Heart left ventricle (tissue), 16 donors: ENCODE measurements at regions of chr4 and their contacts with region 1.

Region 1: DNA sequence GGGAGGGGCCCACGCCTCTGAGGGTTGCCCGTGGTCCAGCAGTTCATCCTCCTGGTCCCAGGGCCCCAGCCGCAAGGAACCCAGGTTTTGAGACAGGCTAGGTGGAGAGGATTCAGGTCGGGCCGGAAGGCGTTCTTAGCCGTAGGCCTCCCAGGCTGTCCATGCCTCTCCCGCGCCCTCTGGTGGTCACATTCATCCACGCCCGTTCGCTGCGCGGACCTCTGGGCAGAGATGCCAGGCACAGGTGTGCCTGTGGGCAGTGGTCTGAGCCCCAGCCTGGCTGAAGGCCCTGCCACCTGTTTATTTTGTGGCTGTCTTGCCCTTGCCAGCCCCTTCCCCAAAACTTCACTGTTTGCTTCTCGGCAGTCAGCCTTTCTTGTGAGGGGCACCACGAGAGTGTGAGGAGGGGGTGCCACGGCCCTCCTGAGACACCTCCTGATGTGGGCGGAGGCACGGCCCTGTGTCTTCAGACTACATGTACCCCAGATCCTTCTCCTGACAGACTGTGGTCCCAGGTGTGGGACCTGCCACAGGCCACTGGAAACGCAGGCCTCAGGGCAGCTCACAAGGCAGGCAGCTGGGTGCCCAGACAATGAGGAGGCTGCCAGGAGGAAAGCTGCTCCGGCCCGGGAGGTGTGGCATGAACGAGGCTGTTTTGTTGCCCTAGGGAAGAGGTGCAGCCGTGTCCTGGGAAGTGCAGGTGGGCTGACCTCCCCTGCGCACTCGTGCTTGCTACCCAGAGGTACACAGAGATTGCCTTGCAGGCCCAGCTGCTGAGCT is 5.0 kb downstream of the UVSSA start:
- DNase-seq: peak; percentile 75 to 91 (median 85)
- ATAC-seq: peak in 3 of 4 donors; percentile 14 to 33 (median 21)
- H3K4me3 ChIP-seq: no peak overlapping the region
- H3K27ac ChIP-seq: peak overlapping the region in 1 of 12 donors; percentile 17
- H3K4me1 ChIP-seq: peaks cover 0 to 25% (median 13%) of the 10 kb centered on the region in 12 donors
- H3K27me3 ChIP-seq: no peaks in the 10 kb centered on the region
- CTCF ChIP-seq: peak; percentile 84 to 99 (median 92)
- POLR2A ChIP-seq: no peak

Region 2: DNA sequence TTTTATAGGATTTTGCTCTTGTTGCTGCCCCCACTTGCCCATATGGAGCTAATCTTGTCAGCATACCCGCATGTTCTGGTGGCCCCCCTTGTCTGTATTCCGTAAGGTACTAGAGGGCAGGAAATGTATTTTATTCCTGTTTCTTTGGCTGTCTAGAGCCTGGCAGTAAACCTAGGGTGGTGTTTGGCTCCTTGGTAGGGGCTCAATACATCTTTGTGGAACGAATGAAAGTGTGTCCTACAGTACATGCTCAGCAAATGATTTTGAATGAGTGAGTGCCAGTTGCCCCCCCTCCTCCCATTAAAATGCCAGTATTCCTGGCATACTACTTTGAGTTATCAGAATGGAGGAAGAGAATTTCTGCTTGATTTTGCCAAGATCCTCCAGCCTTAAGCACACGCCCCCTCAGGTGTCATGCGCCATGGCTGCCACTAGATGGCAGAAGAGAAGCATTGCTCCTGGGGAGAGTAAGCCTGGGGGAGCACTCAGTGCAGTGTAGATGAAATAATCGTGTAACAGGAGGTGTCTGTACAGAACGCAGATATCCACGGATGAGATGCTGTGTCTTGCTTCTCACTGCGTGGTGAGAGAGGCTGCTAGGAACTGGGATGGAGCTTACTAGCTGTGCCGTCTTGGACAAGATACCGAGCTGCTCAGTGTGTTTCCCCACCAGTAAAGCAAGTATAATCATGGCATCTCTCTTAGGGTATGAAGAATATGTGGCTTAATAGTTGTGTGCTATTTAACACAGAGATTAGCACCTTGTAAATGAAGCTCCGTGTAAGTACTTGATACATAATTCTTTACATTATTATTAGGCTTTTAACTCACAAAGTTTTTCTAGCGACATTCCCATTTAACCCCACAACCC is 221.5 kb before region 1 on chr4:
- intact Hi-C with region 1: loop called (anchors 2 to 10 kb)
- DNase-seq: peak in 4 of 5 donors; percentile 51 to 66 (median 56)
- ATAC-seq: peak; percentile 83 to 97 (median 94)
- H3K4me3 ChIP-seq: no peak overlapping the region
- H3K27ac ChIP-seq: no peak overlapping the region
- H3K4me1 ChIP-seq: peaks cover 0 to 3% (median 0%) of the 10 kb centered on the region in 12 donors
- H3K27me3 ChIP-seq: peaks cover 0 to 4% (median 0%) of the 10 kb centered on the region in 9 donors
- CTCF ChIP-seq: peak; percentile 98 to 100 (median 99)
- POLR2A ChIP-seq: no peak

Region 3: DNA sequence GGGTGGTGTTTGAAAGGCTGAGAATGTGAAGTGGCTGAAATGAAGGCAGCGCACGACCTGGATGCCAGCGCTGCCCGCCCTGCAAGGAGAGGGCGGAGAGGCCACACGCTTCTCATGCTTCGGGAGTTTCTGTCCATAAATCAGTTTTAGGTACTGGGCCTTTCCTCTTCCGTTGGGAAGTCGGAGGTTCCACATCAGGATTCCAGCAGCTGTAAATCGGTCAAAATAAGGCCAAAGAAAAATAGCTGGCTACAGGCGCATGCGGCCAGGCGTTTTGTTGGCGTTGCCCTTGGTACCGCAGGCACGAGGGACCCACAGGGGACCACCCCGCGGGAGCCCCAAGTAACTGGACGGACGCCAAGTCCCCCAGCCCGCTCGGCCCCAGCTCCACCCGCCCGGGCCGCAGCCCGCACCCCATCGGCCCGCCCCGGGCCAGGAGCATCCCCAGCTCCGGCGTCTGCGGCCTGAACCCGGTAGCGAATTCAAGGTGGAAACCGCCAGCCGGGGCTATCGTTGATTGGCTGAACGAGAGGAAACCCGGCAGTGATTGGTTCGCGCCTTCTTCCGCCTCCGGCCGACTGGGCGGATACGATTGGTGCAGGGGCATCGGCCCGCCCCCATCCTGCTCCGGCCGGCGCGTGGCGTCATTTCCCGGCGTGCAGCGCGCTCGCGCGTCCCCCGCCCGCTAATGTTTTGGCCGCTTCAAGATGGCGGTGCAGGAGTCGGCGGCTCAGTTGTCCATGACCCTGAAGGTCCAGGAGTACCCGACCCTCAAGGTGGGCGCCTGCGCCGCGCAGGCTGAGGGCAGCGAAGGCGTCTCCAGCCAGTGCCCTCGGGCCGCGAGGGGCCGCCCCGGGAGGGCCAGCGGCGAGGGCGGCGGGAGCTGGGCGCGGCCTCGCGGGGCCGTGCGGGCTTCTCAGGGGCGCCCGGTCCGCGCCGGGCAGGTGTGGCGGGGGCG is 62.6 kb before region 1 on chr4 and contains the start of gene MAEA:
- intact Hi-C with region 1: loop called in 5 of 10 experiments (anchors 2 to 5 kb)
- DNase-seq: peak; percentile 98 to 99 (median 98)
- ATAC-seq: peak; percentile 97 to 98 (median 98)
- H3K4me3 ChIP-seq: peak within 1 kb of the TSS; percentile 81 to 99 (median 96)
- H3K27ac ChIP-seq: peak within 1 kb of the TSS; percentile 75 to 96 (median 90)
- H3K4me1 ChIP-seq: peaks cover 10 to 50% (median 45%) of the 10 kb centered on the region in 12 donors
- H3K27me3 ChIP-seq: no peaks in the 10 kb centered on the region
- CTCF ChIP-seq: peak in 1 of 12 donors; percentile 6
- POLR2A ChIP-seq: peak in 1 of 2 donors; percentile 90
- total RNA-seq, gene MAEA: 41.5 to 57.2 (median 45.1) TPM

Region 4: GRCh38 chr4:1318488-1319213 is 33.4 kb before region 1 on chr4:
- intact Hi-C with region 1: no loop called
- DNase-seq: peak in 2 of 5 donors; percentile 24 to 55
- ATAC-seq: no peak
- H3K4me3 ChIP-seq: no peak overlapping the region
- H3K27ac ChIP-seq: no peak overlapping the region
- H3K4me1 ChIP-seq: peaks cover 0 to 6% (median 0%) of the 10 kb centered on the region in 12 donors
- H3K27me3 ChIP-seq: no peaks in the 10 kb centered on the region
- CTCF ChIP-seq: peak in 7 of 12 donors; percentile 13 to 32 (median 22)
- POLR2A ChIP-seq: no peak

Region 5: DNA sequence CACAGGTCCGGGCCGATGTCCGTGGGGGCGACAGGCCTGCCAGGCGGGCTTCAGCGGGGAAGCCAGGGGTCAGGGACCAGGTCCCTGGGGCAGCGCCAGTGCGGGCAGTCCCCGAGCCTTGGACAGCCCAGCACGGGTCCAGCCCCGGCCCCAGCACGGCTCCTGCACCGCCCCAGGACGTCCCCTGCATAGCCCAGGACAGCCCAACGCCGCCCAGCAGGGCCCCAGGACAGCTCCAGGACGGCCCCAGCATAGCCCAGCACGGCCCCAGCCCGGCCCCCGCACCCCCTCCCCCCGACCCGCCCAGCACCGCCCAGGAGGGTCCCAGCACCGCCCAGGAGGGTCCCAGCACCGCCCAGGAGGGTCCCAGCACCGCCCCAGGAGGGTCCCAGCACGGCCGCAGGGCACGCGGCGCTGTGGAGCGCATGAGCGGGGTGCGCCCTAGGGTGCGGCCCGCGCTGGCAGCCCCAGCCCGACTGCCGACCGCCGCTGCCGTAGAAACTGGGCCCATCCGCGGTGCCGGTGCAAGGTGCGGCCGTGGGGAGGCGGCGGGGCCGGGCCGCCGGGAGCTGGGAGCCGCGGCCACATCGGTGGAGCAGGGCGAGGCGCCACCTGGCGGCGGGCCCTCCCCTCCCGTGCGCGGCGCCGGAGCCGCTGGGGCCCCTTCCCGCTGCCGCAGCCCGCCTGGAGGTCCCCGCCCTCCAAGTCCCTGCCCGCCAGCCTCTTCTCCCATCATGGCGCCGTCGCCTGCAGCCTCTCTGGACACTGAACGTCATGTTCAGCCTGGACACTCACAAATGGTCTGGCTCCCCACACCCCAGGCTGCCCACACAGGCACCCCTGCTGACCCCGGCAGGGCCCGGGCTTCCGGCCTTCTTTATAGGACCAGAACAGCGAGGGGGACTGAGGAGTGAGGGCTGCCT is 161.0 kb after region 1 on chr4:
- intact Hi-C with region 1: loop called in 8 of 10 experiments (anchors 2 to 5 kb)
- DNase-seq: peak in 3 of 5 donors; percentile 30 to 67 (median 36)
- ATAC-seq: peak in 3 of 4 donors; percentile 47 to 75 (median 56)
- H3K4me3 ChIP-seq: peak overlapping the region in 8 of 12 donors; percentile 2 to 48 (median 31)
- H3K27ac ChIP-seq: peak overlapping the region in 2 of 12 donors; percentile 5 to 33
- H3K4me1 ChIP-seq: peaks cover 0 to 16% (median 0%) of the 10 kb centered on the region in 12 donors
- H3K27me3 ChIP-seq: peaks cover 2 to 55% (median 19%) of the 10 kb centered on the region in 9 donors
- CTCF ChIP-seq: peak; percentile 35 to 83 (median 58)
- POLR2A ChIP-seq: no peak

Region 6: GRCh38 chr4:1544861-1545281 is 192.8 kb after region 1 on chr4:
- intact Hi-C with region 1: no loop called
- DNase-seq: peak in 2 of 5 donors; percentile 26 to 46
- ATAC-seq: no peak
- H3K4me3 ChIP-seq: peak overlapping the region in 6 of 12 donors; percentile 6 to 39 (median 24)
- H3K27ac ChIP-seq: peak overlapping the region in 11 of 12 donors; percentile 4 to 78 (median 67)
- H3K4me1 ChIP-seq: peaks cover 0 to 34% (median 12%) of the 10 kb centered on the region in 12 donors
- H3K27me3 ChIP-seq: peaks cover 0 to 3% (median 0%) of the 10 kb centered on the region in 9 donors
- CTCF ChIP-seq: no peak
- POLR2A ChIP-seq: no peak

Region 7: DNA sequence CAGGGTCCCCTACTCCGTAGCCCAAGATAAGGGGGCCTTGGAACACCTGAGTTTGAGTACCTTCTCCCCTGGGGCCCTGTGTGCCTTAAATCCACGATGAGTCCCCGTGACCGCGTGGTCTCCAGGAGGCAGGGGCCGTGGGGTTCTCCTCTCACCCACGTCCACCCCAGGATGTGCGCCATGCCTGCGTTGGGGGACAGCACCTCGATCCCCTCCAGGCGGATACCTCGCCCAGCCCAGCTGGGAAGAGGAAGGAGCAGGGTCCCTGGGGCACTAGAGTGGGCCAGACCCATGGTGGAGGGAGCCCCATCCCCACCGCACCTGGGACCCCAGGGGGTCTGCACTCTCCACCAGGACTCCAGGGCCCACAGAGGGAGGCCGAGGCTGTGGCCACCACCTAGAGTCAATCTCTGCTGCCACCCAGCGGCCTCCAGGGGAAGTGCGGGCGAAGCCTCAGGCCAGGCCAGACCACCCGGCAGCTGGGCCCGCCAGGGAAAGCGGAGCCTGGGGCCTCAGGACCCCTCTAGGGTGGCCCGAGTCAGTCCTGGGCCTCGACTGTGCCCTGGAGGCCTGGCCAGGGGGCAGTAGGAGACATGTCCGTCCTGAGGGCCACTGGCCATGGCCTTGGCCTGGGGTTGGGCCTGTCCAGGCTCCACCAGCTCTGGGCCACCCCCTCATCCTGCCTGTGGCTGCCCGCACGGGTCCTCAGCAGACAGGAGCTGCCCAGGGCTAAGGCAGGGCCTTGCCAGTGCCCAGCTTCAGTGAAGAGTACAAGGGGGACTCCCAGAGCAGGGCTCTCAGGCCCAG is 277.1 kb after region 1 on chr4:
- intact Hi-C with region 1: loop called (anchors 1 to 5 kb)
- DNase-seq: peak; percentile 46 to 82 (median 63)
- ATAC-seq: peak; percentile 53 to 84 (median 78)
- H3K4me3 ChIP-seq: no peak overlapping the region
- H3K27ac ChIP-seq: no peak overlapping the region
- H3K4me1 ChIP-seq: peaks cover 0 to 10% (median 0%) of the 10 kb centered on the region in 12 donors
- H3K27me3 ChIP-seq: no peaks in the 10 kb centered on the region
- CTCF ChIP-seq: peak; percentile 88 to 99 (median 97)
- POLR2A ChIP-seq: no peak

Region 8: DNA sequence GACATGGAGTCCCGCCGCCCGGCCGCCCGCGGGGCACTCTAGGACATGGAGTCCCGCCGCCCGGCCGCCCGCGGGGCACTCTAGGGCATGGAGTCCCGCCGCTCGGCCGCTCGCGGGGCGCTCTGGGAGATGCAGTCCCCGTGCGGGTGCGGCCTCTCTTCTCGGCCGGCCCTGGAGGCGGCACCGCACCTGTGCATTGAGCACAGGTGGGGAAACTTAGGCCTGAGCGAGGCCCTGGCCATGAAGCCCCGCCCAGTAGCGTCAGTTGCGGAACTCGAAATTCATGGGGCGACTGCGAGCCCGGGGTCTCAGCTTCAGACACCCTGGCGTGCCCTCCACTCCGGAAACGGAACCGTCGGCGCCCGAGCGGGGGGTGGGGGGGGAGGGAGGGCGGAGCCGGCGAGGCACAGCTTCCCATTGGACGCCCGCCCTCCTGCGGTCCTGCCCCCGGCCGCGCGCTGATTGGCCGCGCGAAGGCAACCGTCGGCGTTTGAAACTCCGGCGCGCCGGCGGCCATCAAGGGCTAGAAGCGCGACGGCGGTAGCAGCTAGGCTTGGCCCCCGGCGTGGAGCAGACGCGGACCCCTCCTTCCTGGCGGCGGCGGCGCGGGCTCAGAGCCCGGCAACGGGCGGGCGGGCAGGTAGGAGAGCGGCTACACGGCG is 369.1 kb after region 1 on chr4 and contains the starts of genes TACC3 and TMEM129:
- intact Hi-C with region 1: loop called in 8 of 10 experiments (anchors 2 to 10 kb)
- DNase-seq: peak; percentile 94 to 96 (median 94)
- ATAC-seq: peak; percentile 88 to 93 (median 90)
- H3K4me3 ChIP-seq: peak within 1 kb of the TSS; percentile 43 to 94 (median 80)
- H3K27ac ChIP-seq: peak within 1 kb of the TSS; percentile 91 to 98 (median 95)
- H3K4me1 ChIP-seq: peaks cover 5 to 69% (median 34%) of the 10 kb centered on the region in 12 donors
- H3K27me3 ChIP-seq: no peaks in the 10 kb centered on the region
- CTCF ChIP-seq: no peak
- POLR2A ChIP-seq: peak in 1 of 2 donors; percentile 66
- total RNA-seq, gene TACC3: 2.9 to 19.1 (median 6.0) TPM
- total RNA-seq, gene TMEM129: 28.6 to 73.3 (median 37.2) TPM

Region 9: GRCh38 chr4:1726146-1726934 is 374.3 kb after region 1 on chr4:
- intact Hi-C with region 1: loop called in 8 of 10 experiments (anchors 2 to 10 kb)
- DNase-seq: peak; percentile 84 to 94 (median 88)
- ATAC-seq: peak; percentile 47 to 75 (median 56)
- H3K4me3 ChIP-seq: no peak overlapping the region
- H3K27ac ChIP-seq: peak overlapping the region; percentile 48 to 87 (median 76)
- H3K4me1 ChIP-seq: peaks cover 10 to 84% (median 34%) of the 10 kb centered on the region in 12 donors
- H3K27me3 ChIP-seq: no peaks in the 10 kb centered on the region
- CTCF ChIP-seq: peak; percentile 97 to 100 (median 98)
- POLR2A ChIP-seq: no peak

Region 10: GRCh38 chr4:2168469-2169319 is 816.6 kb after region 1 on chr4:
- intact Hi-C with region 1: no loop called
- DNase-seq: no peak
- ATAC-seq: no peak
- H3K4me3 ChIP-seq: no peak overlapping the region
- H3K27ac ChIP-seq: no peak overlapping the region
- H3K4me1 ChIP-seq: peaks cover 0 to 10% (median 0%) of the 10 kb centered on the region in 12 donors
- H3K27me3 ChIP-seq: no peaks in the 10 kb centered on the region
- CTCF ChIP-seq: no peak
- POLR2A ChIP-seq: no peak